IMR-90 (cell line): ENCODE measurements at regions of chr18 and their contacts with region 1.

Region 1: GRCh38 chr18:5097116-5097703 is 99.8 kb downstream of the AKAIN1 start:
- DNase-seq: no peak
- ATAC-seq: no peak
- H3K4me3 ChIP-seq: no peak overlapping the region
- H3K27ac ChIP-seq: no peak overlapping the region
- H3K4me1 ChIP-seq: no peaks in the 10 kb centered on the region
- H3K27me3 ChIP-seq: no peaks in the 10 kb centered on the region
- CTCF ChIP-seq: no peak
- POLR2A ChIP-seq: no peak
- RAD21 ChIP-seq: no peak

Region 2: DNA sequence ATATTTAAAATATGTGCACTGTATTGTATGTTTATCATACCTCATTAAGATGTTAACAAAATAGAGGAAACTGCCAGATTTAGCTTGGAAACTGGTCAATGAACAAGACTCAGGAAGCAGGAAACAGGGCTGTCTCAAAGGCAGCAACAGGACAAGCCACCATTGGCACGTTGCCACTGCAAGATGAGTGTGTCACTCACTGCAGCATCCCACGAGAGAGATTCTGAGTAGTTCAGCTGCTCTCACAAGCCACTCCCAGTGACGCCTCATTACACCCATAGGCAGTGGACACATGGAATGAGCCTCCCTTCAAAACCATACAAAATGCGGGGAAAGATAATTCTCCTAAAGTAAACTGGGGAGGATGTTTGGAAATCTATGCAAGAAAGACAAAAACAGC is 460.2 kb before region 1 on chr18:
- CTCF ChIA-PET with region 1: no interaction called
- POLR2A ChIA-PET with region 1: no interaction called
- dilution Hi-C with region 1: no loop called
- in situ Hi-C with region 1: no loop called
- intact Hi-C with region 1: no loop called
- DNase-seq: no peak
- ATAC-seq: no peak
- H3K4me3 ChIP-seq: no peak overlapping the region
- H3K27ac ChIP-seq: no peak overlapping the region
- H3K4me1 ChIP-seq: no peaks in the 10 kb centered on the region
- H3K27me3 ChIP-seq: no peaks in the 10 kb centered on the region
- CTCF ChIP-seq: no peak
- POLR2A ChIP-seq: no peak
- RAD21 ChIP-seq: no peak

Region 3: DNA sequence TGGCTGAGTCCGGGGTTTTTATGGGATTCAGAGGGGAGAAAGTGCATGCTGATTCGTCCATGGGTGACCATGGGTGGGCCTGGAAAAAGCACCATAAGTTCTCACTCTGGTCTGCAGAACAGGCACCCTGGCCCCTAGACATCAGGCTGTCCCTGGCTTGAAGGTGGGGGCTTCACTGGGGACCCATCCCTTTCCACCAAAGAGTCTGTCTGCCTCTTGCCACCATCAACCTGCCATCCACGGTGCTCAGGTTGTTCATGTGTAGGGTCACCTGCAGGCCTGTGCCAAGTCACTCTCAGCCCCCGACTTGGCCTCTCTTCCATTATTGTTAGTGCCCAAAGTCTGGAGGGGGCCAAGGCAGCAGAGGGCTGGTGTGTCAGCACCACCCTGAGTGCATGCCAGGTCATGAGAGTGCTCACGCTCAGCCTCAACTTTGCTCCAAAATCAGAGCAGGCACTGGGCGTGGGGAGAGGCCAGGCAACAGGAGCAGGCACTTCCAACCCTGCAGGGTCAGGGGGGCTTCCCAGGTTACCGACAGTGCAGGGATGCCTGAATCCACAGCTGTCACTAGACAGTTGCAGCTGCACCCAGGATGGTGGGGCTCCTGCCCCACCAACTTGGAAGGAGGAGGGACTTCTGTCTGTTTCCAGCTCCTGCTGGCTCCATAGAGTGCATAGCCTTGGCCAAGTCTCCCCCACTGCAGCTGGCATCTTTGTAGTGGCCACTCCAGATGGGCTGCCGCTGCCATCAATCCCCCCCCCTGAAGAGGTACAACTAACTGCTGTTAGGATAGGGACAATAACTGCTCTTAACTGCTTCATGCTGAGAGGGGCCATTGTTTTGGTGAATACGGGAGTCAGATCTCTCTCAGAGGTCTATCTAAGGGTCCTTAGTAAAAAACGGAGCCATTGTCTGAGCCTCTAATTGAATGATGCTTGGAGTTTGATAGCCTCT is 109.5 kb before region 1 on chr18:
- CTCF ChIA-PET with region 1: no interaction called
- POLR2A ChIA-PET with region 1: no interaction called
- dilution Hi-C with region 1: no loop called
- in situ Hi-C with region 1: loop called (anchors 25 kb)
- intact Hi-C with region 1: no loop called
- DNase-seq: no peak
- ATAC-seq: no peak
- H3K4me3 ChIP-seq: no peak overlapping the region
- H3K27ac ChIP-seq: no peak overlapping the region
- H3K4me1 ChIP-seq: no peaks in the 10 kb centered on the region
- H3K27me3 ChIP-seq: no peaks in the 10 kb centered on the region
- CTCF ChIP-seq: no peak
- POLR2A ChIP-seq: no peak
- RAD21 ChIP-seq: no peak

Region 4: DNA sequence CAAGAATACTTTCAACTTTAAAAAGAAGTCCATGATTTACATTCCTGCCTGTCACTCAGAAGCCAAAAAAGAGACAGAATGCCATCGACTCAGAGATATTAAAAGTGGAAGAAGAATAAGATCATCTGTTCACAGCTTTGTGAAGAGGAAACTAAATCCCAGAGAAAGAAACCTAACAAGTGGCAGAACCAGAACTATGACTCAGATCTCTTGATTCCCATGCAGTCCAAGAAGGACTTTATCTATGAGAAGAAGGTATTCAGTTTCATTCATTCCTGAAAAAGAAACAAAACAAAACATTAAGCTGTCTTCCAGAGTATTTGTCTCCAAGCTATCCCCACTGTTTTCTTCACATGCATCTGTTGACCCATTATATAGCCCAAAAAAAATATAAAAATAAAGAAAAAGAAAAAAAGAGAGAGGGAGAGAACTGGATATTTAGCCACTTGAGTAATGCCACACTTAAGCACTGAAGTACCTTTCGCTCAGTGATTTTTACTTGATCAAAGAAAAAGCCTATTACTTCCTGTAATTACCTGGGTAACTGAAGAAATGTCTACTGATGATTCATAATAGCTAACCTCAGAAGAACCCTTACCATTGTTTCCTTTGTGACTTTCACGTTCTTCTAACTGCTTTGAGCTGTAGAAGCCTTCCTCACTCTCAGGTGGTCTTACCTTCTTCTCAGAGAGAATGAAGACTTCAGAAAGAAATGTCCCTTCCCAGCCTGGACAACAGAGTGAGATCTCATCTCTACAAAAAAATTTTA is 117.6 kb after region 1 on chr18:
- CTCF ChIA-PET with region 1: no interaction called
- POLR2A ChIA-PET with region 1: no interaction called
- dilution Hi-C with region 1: no loop called
- in situ Hi-C with region 1: no loop called
- intact Hi-C with region 1: no loop called
- DNase-seq: no peak
- ATAC-seq: no peak
- H3K4me3 ChIP-seq: no peak overlapping the region
- H3K27ac ChIP-seq: no peak overlapping the region
- H3K4me1 ChIP-seq: no peaks in the 10 kb centered on the region
- H3K27me3 ChIP-seq: no peaks in the 10 kb centered on the region
- CTCF ChIP-seq: no peak
- POLR2A ChIP-seq: no peak
- RAD21 ChIP-seq: no peak

Region 5: DNA sequence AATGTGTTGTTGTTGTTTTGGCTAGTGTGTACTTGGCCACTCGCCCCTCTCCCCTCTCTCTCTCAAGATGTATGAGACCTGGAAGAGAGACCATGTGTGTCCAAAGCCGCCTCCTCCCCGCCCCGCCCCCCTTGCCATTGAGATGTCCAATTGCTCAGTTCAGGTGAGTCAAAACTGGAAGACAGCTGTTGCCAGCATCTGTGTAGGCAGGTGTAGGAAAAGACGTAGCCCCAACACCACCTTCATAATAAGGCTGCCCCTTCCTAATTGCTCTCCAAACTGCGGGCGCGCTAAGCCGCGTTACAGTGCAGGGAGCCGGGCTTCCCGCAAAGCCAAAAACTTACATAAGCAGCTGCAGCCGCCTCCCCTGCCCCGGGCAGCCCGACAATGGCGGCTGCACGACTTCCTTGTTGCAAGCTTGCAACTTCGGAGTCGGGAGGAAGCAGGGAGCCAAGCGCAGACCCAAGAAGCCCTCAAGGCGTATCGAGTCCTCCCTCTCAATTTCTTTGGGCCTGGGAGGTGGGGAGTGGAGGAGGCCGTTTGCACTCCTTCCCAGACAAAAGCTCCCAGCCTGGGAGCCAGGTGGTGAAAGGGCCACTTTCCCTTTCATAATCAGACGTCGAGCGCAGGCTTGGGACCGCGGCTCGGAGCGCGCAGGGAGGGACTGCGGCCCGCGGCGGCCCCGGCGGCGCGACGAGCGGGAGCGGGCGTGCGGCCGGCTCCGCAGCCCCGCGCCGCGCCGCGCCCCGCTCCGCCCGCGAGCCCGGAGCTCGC is 197.4 kb after region 1 on chr18:
- CTCF ChIA-PET with region 1: no interaction called
- POLR2A ChIA-PET with region 1: no interaction called
- dilution Hi-C with region 1: no loop called
- in situ Hi-C with region 1: no loop called
- intact Hi-C with region 1: no loop called
- DNase-seq: peak; percentile 51
- ATAC-seq: peak; percentile 2
- H3K4me3 ChIP-seq: peak overlapping the region; percentile 65
- H3K27ac ChIP-seq: peak overlapping the region; percentile 86
- H3K4me1 ChIP-seq: peaks cover 3% of the 10 kb centered on the region
- H3K27me3 ChIP-seq: no peaks in the 10 kb centered on the region; the same call in 1 of the 2 replicates
- CTCF ChIP-seq: no peak
- POLR2A ChIP-seq: no peak
- RAD21 ChIP-seq: no peak